ENCODE measurements at regions of chr20 and their contacts with region 1.

Region 1: GRCh38 chr20:38229376-38230252 is 30.9 kb downstream of the KIAA1755 start:
- DNase-seq: peak in 1 of 2 donors; percentile 7
- ATAC-seq: peak in 1 of 2 donors; percentile 30
- H3K4me3 ChIP-seq: no peak overlapping the region
- H3K27ac ChIP-seq: no peak overlapping the region
- H3K4me1 ChIP-seq: no peaks in the 10 kb centered on the region
- H3K27me3 ChIP-seq: no peaks in the 10 kb centered on the region
- CTCF ChIP-seq: peak; percentile 33 to 67 (median 64)
- POLR2A ChIP-seq: no peak

Region 2: DNA sequence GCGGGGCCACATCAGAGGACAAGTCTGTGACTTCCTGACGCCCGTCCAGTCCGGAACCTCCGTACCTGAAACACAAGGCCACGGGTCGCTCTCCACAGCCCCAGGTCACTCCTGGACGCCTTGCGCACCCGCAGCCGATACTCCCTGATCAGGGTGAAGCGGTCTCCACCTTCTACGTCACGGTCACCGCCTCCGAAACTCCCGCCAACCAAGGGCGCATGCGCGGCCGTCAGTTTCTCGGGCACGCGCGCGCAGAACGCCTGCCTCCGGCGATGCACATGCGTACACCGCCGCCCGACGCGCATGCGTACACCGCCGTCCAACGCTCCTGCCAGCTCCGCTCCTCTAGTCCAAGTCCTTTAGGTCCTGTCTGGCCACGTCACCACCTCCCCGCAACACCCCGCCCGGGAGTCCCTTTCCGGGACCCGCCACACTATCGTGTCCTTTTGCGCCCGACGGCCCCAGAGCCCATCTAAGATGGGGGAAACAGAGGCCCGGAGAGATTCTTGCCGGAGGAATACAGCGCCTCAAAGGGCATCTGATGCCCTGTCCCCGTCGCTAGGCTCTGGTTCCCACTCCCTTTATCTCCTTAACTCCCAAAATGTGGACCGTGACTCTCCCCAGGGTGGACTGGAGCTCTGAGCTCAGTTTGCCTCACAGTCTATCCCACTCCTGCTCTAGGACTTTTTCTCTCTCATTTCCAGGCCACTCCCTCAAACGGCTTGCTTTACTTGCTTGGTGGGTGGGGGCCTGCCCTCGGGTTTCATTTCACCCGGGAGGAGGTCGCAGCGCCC is 1455.8 kb before region 1 on chr20 and contains the start of gene DSN1:
- in situ Hi-C with region 1: no loop called
- intact Hi-C with region 1: no loop called
- DNase-seq: peak; percentile 93 to 97
- ATAC-seq: peak; percentile 94 to 96
- H3K4me3 ChIP-seq: peak within 1 kb of the TSS; percentile 82 to 91 (median 84)
- H3K27ac ChIP-seq: peak within 1 kb of the TSS; percentile 88 to 95 (median 91)
- H3K4me1 ChIP-seq: peaks cover 8 to 12% of the 10 kb centered on the region in 2 donors
- H3K27me3 ChIP-seq: no peaks in the 10 kb centered on the region
- CTCF ChIP-seq: no peak
- POLR2A ChIP-seq: peak; percentile 50 to 52
- total RNA-seq, gene DSN1: 3.2 to 6.3 (median 5.2) TPM

Region 3: DNA sequence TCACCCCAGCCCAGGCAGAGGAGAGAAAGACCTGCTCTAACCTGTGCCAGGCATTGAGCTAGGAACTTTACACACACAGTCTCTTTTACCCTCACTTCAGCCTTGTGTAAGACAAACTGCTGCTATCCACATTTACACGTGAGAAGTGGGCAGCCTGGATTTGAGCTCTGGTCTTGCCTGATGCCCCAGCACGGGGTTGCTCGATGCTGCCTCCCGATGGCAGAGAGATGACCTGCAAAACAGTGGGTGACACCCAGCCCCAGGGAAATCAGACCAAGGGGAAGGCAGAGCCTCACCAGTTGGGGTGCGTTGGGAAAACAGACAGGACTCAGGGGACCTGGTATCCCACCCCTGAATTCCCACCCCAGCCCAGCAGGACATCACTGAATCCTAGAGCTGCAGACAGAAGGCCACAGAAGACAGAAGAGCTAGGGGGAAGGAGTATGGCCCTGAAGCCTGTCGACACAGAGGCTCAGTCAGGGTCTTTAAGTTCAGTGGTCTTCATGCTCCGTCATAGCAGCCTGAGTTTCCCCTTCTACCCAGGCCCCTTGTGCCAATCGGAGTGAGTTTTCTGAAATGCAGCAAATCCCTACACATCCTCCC is 75.3 kb after region 1 on chr20:
- in situ Hi-C with region 1: loop called in 2 of 4 experiments (anchors 10 kb)
- intact Hi-C with region 1: loop called (anchors 1 kb)
- DNase-seq: peak in 1 of 2 donors; percentile 52
- ATAC-seq: peak in 1 of 2 donors; percentile 85
- H3K4me3 ChIP-seq: no peak overlapping the region
- H3K27ac ChIP-seq: no peak overlapping the region
- H3K4me1 ChIP-seq: no peaks in the 10 kb centered on the region
- H3K27me3 ChIP-seq: no peaks in the 10 kb centered on the region
- CTCF ChIP-seq: peak; percentile 40 to 67 (median 45)
- POLR2A ChIP-seq: no peak

Region 4: DNA sequence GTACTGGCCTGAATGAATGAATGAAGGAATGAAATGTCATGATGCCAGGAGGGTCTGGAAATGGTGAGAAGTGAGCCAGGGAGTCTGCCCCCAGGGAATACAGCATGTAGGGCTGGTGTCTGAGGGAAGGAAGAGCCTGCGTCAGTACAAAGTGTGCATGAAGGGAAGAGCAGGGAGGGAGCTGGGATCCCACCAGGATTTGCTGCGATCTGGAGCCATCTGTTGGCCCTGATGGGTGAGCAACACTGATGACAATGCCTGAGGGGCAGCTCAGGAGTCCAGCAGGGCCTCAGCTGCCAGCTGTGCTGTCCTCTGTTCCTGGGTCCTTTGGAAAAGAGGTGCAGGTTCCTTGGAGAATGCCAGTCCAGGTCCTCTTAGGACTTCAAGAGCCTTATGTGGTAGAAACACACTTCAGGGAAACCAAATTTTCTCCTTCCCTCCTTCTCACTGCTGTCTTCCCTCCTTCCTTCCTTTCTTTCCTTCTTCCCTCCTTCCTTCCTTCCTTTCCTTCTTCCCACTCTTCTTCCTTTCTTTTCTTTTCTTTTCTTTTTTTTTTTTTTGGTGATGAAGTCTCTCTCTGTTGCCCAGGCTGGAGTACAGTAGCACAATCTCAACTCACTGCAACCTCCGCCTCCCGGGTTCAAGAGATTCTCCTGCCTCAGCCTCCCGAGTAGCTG is 85.8 kb after region 1 on chr20:
- in situ Hi-C with region 1: loop called in 1 of 4 experiments (anchors 10 kb)
- intact Hi-C with region 1: loop called (anchors 5 kb)
- DNase-seq: no peak
- ATAC-seq: no peak
- H3K4me3 ChIP-seq: no peak overlapping the region
- H3K27ac ChIP-seq: no peak overlapping the region
- H3K4me1 ChIP-seq: no peaks in the 10 kb centered on the region
- H3K27me3 ChIP-seq: no peaks in the 10 kb centered on the region
- CTCF ChIP-seq: no peak
- POLR2A ChIP-seq: no peak

Region 5: GRCh38 chr20:38321959-38322598 is 92.5 kb after region 1 on chr20:
- in situ Hi-C with region 1: loop called in 1 of 4 experiments (anchors 10 kb)
- intact Hi-C with region 1: loop called (anchors 5 kb)
- DNase-seq: peak in 1 of 2 donors; percentile 12
- ATAC-seq: peak in 1 of 2 donors; percentile 39
- H3K4me3 ChIP-seq: no peak overlapping the region
- H3K27ac ChIP-seq: no peak overlapping the region
- H3K4me1 ChIP-seq: no peaks in the 10 kb centered on the region
- H3K27me3 ChIP-seq: no peaks in the 10 kb centered on the region
- CTCF ChIP-seq: peak; percentile 43 to 60 (median 55)
- POLR2A ChIP-seq: no peak

Measured in gastrocnemius medialis (tissue), 4 donors.